ENCODE measurements at regions of chr20 and their contacts with region 1.

Region 1: GRCh38 chr20:37202267-37202943 is 23.1 kb upstream of the MROH8 start:
- DNase-seq: no peak
- ATAC-seq: peak; percentile 78 to 89

Region 2: DNA sequence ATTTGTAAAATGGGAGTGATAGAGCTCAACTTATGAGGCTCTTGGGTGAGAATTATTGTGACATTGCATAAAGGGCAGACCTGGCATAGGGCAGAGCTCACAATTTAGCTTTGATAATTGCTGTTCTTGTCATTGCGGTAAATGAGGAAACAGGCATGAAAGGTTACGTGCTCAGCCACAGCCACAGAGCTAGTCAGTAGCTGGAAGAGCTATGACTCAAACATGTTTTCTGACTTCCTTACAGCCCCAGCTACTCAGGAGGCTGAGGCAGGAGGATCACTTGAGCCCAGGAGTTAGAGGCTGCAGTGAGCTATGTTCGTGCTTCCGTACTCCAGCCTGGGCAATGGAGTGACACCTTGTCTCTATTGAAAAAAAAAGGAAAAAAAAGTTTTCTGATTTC is 62.7 kb after region 1 on chr20:
- intact Hi-C with region 1: loop called in 1 of 2 experiments (anchors 10 kb)
- DNase-seq: no peak
- ATAC-seq: no peak